Endothelial cell of umbilical vein (primary cell): ENCODE measurements at regions of chr4 and their contacts with region 1.

Region 1: DNA sequence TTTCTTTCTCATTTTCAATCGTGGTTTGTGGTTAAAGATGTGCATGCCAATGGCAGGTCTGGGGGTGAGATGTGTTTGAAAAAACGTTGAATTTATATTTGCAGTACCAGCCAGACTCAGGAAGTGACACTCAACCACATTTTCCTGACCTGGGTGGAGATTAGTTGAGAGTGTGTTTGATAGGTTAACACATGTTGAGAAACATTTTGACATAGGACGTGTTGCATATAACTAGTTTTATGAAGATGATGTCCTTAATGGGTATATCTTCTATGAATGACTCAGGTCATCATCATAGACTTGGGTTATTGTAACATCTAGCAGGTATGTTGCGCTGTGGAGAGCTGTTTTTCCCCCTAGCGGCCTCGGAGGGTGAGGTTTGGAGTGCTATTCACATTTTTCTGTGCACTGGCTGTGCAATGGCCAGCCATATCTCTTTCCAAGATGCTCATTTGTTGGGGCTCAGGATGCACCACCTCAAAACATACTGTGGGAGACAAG is 21.7 kb upstream of the CD38 start:
- DNase-seq: no peak
- H3K4me3 ChIP-seq: no peak overlapping the region
- H3K27ac ChIP-seq: no peak overlapping the region
- H3K4me1 ChIP-seq: peaks cover 16% of the 10 kb centered on the region
- H3K27me3 ChIP-seq: no peaks in the 10 kb centered on the region
- CTCF ChIP-seq: no peak
- POLR2A ChIP-seq: no peak

Region 2: GRCh38 chr4:15469402-15470127 is 286.8 kb before region 1 on chr4 and contains the start of gene CC2D2A:
- CTCF ChIA-PET with region 1: no interaction called
- POLR2A ChIA-PET with region 1: no interaction called
- dilution Hi-C with region 1: no loop called
- intact Hi-C with region 1: no loop called
- DNase-seq: peak; percentile 67
- H3K4me3 ChIP-seq: peak within 1 kb of the TSS; percentile 44 to 83 (median 51)
- H3K27ac ChIP-seq: no peak within 1 kb of the TSS
- H3K4me1 ChIP-seq: peaks cover 3% of the 10 kb centered on the region
- H3K27me3 ChIP-seq: peaks cover 2 to 10% of the 10 kb centered on the region in 2 experiments
- CTCF ChIP-seq: no peak
- POLR2A ChIP-seq: no peak
- total RNA-seq, gene CC2D2A: 13.2 and 22.4 TPM in 2 replicates

Region 3: GRCh38 chr4:15525054-15525453 is 231.4 kb before region 1 on chr4:
- CTCF ChIA-PET with region 1: no interaction called
- POLR2A ChIA-PET with region 1: no interaction called
- dilution Hi-C with region 1: no loop called
- intact Hi-C with region 1: no loop called
- DNase-seq: no peak
- H3K4me3 ChIP-seq: no peak overlapping the region
- H3K27ac ChIP-seq: no peak overlapping the region
- H3K4me1 ChIP-seq: no peaks in the 10 kb centered on the region
- H3K27me3 ChIP-seq: no peaks in the 10 kb centered on the region
- CTCF ChIP-seq: no peak
- POLR2A ChIP-seq: no peak

Region 4: GRCh38 chr4:15719506-15719905 is 36.9 kb before region 1 on chr4:
- CTCF ChIA-PET with region 1: no interaction called
- POLR2A ChIA-PET with region 1: no interaction called
- dilution Hi-C with region 1: no loop called
- intact Hi-C with region 1: no loop called
- DNase-seq: no peak
- H3K4me3 ChIP-seq: no peak overlapping the region
- H3K27ac ChIP-seq: no peak overlapping the region
- H3K4me1 ChIP-seq: peaks cover 2% of the 10 kb centered on the region
- H3K27me3 ChIP-seq: no peaks in the 10 kb centered on the region
- CTCF ChIP-seq: no peak
- POLR2A ChIP-seq: no peak

Region 5: DNA sequence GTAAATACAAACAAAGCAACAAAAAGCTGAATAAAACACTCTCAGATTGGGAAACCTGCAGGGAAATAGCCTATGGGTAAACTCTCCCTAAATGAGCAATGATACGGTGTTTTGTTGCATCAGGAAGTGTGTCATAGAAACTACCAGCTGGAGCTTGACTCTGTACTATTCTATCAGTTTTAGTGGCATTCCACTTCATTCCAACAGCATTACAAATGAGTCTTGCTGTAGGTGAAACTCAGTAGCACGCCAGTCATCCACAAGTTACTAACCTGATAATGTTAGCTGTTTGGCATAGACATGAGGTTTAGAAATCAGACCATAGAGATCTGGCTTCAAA is 157.2 kb after region 1 on chr4:
- CTCF ChIA-PET with region 1: no interaction called
- POLR2A ChIA-PET with region 1: no interaction called
- dilution Hi-C with region 1: no loop called
- intact Hi-C with region 1: no loop called
- DNase-seq: peak; percentile 72
- H3K4me3 ChIP-seq: no peak overlapping the region
- H3K27ac ChIP-seq: peak overlapping the region; percentile 24
- H3K4me1 ChIP-seq: peaks cover 10% of the 10 kb centered on the region
- H3K27me3 ChIP-seq: no peaks in the 10 kb centered on the region
- CTCF ChIP-seq: no peak
- POLR2A ChIP-seq: no peak

Region 6: DNA sequence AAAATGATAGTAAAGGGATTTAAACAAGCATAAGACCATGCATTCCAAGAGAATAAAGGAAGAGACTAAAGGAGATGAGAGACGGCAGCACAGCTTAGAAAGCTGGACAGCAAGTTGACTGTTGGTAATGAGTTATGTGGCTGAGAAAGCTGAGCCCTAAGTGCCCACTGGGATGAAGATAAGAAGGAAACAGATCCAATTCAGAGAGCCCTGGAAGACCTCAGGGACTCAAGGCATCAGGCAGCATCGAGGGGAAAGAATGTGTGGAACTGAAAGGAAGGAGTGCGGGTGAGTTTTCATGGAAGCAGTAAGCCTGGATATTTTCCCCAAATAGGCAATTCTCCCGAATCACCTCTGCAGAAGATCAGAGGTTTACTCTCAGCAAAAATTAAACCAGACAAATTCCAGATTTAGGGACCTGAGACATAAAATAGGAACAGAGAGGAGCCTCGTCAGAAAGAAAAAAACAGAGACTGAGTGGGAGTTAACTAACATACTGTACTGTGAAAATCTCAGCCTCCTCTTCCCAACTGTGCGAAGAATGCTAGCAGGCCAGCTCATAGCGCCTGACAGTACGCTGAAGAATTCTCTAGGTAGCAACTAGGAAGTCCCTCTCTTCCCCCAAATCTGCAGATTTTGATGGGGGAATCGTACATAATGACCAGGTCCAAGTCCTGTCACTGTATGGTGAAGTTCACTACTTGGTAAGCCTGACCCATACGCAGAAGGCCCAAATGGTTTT is 657.6 kb after region 1 on chr4:
- CTCF ChIA-PET with region 1: no interaction called
- POLR2A ChIA-PET with region 1: no interaction called
- dilution Hi-C with region 1: no loop called
- intact Hi-C with region 1: loop called (anchors 5 kb)
- DNase-seq: no peak
- H3K4me3 ChIP-seq: no peak overlapping the region
- H3K27ac ChIP-seq: no peak overlapping the region
- H3K4me1 ChIP-seq: peaks cover 11% of the 10 kb centered on the region
- H3K27me3 ChIP-seq: peaks cover 0 to 3% of the 10 kb centered on the region in 2 experiments
- CTCF ChIP-seq: no peak
- POLR2A ChIP-seq: no peak